ENCODE measurements at regions of chr14 and their contacts with region 1.

Region 1: DNA sequence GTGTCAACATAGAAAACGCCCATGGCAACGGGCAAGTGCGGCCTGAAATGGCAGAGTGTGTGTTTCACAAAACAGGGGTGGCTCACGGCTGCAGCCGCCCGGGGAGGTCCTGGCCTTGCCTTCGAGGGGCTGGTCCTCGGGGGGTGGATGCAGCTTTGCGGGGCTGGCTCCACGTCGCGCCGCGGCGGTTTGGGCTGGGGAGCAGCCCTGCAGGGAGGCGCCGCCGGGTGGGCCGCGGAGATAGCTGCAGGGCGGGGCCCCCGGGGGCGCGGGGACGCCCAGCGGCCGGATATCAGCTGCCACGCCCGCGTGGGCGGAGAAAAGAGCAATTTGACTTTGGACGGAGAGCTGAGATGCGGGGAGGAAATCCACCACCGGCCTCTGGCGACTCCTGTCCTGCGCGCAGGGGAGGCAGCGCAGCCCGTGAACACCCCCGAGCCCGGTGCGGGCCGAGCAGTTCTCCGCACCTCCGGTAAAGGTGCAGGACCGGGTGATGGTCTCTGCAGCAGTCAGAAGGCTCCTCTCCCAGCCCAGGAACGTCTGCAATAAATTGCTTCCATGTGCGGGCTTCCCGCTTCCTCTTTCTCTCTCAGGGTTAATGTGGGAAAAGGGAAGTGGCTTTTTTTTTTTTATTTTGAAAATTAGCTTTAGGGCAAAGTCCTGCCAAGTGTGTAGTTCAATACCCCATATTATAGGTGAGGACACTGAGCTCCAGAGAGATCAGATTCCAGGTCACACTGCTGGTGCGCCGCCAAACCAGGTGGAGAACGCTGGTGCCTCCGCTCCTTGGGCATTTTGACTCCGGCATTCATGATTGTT is 110.5 kb downstream of the ARF6 start:
- DNase-seq: peak; percentile 90
- ATAC-seq: peak; percentile 31
- H3K4me3 Mint-ChIP-seq: peak overlapping the region; percentile 82
- H3K27ac Mint-ChIP-seq: peak overlapping the region; percentile 95
- H3K4me1 Mint-ChIP-seq: peaks cover 43% of the 10 kb centered on the region
- H3K27me3 Mint-ChIP-seq: no peaks in the 10 kb centered on the region

Region 2: DNA sequence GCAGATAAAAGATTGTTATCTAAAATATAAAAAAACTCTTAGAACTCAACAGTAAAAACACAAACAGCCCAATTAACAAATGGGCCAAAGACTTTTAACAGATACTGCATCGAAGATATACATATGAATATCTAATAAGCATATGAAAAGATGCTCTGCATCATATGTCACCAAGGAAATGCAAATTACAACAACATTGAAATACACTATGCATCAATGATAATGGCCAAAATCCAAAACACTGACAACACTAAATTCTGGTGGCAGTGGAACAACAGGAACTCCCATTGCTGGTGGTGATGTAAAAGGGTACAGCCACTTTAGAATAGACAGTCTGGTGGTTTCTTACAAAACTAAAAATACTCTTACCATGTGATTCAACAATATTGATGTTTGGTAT is 194.6 kb before region 1 on chr14:
- POLR2A ChIA-PET with region 1: no interaction called
- DNase-seq: no peak
- ATAC-seq: no peak
- H3K4me3 Mint-ChIP-seq: no peak overlapping the region
- H3K27ac Mint-ChIP-seq: no peak overlapping the region
- H3K4me1 Mint-ChIP-seq: peaks cover 7% of the 10 kb centered on the region
- H3K27me3 Mint-ChIP-seq: no peaks in the 10 kb centered on the region

Region 3: DNA sequence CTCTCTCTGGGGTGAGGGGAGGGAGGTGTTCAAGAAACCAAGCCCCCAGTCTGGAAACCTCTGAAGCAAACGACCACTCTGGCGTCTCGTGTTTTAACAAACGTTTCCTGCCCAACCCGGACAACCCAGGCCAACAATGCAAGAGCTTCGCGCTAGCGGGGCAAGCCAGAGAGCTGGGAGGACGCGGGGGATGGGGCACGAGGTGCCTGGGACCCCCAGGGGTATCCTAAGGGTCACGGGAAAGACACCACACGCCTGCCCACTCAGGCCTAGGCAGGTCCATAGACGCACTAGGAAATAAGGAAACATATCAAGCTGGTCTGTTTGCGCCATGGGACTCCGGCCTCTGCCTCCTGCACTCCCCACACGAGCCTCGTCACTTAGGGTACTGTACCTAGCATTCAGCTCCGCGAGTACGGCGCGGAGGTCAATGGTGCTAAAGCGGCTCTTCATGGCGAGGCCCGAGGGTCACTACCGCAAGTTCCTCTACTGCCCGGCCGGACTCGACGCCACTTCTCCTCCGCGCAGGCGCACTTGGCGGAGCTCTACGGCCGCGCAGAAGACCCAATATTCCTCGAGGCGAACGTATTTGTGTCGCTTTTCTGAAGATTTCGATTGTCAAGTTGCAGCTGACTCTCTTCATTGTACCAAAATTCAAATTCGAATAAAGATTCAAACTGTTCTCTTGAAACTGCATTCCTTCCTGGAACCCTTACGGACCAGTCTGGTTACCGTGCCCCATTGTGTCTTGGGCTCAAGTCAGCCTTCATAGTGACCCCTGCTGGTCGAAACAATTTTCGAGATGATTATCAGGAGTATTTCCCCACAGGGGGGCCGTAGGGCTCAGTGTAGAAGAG is 150.9 kb before region 1 on chr14 and contains the start of gene NEMF:
- POLR2A ChIA-PET with region 1: interaction called, 13 read pairs
- DNase-seq: peak; percentile 81
- ATAC-seq: peak; percentile 80
- H3K4me3 Mint-ChIP-seq: peak within 1 kb of the TSS; percentile 99
- H3K27ac Mint-ChIP-seq: peak within 1 kb of the TSS; percentile 99
- H3K4me1 Mint-ChIP-seq: peaks cover 29% of the 10 kb centered on the region
- H3K27me3 Mint-ChIP-seq: no peaks in the 10 kb centered on the region
- total RNA-seq, gene NEMF: 90.1 to 91.1 TPM

Region 4: DNA sequence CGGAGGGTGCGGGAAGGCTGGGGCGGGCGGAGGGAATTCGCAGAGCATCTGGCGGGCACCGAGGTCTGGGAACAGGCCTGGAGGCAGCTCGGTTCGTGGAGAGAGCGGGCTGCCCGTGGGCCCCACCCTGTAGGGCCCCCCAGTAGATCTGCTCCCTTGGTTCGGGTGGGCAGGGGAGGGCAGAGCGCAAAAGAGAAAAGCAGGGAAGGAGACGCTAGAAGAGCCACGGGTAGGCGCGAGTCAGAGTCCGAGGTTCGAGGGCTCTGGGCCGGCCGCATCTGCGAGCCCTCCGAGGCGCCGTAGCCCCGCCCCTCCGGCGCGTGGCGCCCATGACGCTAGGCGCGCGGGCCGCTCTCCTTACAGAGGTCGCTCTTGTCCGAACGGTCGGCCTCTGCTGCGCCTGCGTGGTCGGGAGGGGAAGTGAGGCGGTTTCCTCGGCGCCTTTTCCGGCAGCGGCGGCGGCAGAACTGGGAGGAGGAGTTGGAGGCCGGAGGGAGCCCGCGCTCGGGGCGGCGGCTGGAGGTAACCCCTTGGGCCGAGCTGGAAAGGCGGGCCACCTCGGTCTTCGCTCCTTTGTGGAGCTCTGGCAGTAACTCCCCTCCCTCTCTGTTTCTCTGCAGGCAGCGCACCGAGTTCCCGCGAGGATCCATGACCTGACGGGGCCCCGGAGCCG is 110.7 kb before region 1 on chr14 and contains the start of gene ARF6:
- POLR2A ChIA-PET with region 1: interaction called, 121 read pairs
- DNase-seq: peak; percentile 98
- ATAC-seq: peak; percentile 89
- H3K4me3 Mint-ChIP-seq: peak within 1 kb of the TSS; percentile 99
- H3K27ac Mint-ChIP-seq: peak within 1 kb of the TSS; percentile 99
- H3K4me1 Mint-ChIP-seq: peaks cover 16% of the 10 kb centered on the region
- H3K27me3 Mint-ChIP-seq: no peaks in the 10 kb centered on the region
- total RNA-seq, gene ARF6: 162 to 169 TPM

Region 5: DNA sequence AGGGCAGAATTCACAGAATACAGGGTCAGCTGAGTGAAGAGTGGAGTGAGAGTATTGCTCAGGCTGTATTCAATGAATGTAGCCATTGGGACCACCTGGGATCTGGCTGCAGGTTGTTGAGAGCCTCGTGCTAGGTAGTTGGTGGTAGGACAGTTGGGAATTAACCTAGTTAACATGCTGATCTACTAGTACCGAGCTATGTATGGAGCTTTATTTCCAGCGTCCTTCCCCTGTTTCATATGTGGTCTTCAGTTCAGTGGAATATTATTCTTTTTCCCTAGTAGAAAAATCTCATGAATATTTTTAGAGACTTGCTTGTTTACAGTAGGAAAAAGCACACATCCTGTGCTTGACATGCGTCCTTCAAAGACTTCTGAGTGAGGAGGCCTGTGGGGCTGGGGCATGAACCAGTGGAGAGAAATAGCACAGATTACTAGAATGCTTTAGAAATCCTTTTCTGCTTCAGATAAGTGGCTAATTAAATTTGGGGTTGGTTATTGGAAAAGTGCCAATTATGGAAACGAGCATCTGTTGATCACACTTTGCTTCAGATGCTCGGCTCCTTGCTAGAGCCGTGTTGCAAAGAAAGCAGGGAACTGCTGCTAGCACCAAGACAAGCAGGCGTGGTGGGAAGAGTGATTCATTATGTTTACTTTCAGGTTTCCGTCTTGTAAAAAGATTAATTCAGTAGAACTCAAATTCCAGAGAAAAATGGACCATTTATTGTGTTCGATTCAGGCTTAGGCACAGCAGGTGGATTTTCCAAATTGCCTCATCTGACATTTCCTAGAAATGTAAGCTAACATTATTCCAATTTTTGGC is 56.9 kb before region 1 on chr14:
- POLR2A ChIA-PET with region 1: interaction called, 32 read pairs
- DNase-seq: no peak
- ATAC-seq: peak; percentile 66
- H3K4me3 Mint-ChIP-seq: peak overlapping the region; percentile 58
- H3K27ac Mint-ChIP-seq: peak overlapping the region; percentile 89
- H3K4me1 Mint-ChIP-seq: peaks cover 64% of the 10 kb centered on the region
- H3K27me3 Mint-ChIP-seq: no peaks in the 10 kb centered on the region

Region 6: DNA sequence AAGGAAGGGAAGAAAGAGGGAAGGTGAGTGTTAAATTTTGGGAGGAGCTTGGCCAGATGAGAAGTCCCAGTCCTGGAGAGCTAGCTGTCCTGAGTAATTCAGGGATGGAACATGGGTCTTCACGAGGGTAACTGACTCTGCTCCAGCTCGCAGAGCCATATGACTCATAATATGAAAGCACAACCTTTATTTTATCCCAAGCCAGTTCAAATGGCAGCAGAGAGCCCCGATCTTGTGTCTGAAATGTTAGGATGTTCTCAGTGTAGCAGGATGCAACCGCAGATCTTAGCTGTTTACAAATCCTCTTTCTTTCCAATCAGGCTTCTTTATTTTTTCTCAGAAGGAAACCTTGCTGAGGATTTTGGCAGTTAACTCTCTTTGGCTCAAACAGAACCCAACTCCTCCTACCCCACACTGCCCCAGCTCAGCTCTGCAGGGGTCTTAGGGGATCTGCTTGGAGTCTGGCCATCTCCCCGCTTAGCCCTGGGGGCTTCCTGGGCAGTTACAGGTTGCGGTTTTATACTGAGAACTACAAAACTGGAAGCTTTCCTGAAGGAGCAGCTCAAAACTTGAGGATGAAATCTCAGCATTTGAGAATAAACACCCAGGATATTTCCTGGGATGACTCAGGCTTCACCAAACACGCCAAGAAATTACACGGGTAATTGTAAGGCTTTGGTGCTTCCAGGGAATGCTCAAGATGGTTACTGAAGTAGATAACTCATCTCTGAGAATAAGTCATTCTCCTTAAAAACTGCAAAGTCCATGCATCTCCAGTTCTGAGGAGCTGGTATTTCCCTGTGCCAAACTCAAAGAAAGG is 20.5 kb after region 1 on chr14:
- POLR2A ChIA-PET with region 1: interaction called, 10 read pairs
- DNase-seq: no peak
- ATAC-seq: no peak
- H3K4me3 Mint-ChIP-seq: no peak overlapping the region
- H3K27ac Mint-ChIP-seq: no peak overlapping the region
- H3K4me1 Mint-ChIP-seq: peaks cover 21% of the 10 kb centered on the region
- H3K27me3 Mint-ChIP-seq: no peaks in the 10 kb centered on the region

Region 7: GRCh38 chr14:50060871-50061663 is 57.6 kb after region 1 on chr14:
- POLR2A ChIA-PET with region 1: interaction called, 239 read pairs
- DNase-seq: peak; percentile 65
- ATAC-seq: peak; percentile 11
- H3K4me3 Mint-ChIP-seq: peak overlapping the region; percentile 99
- H3K27ac Mint-ChIP-seq: peak overlapping the region; percentile 100
- H3K4me1 Mint-ChIP-seq: peaks cover 76% of the 10 kb centered on the region
- H3K27me3 Mint-ChIP-seq: no peaks in the 10 kb centered on the region

Region 8: DNA sequence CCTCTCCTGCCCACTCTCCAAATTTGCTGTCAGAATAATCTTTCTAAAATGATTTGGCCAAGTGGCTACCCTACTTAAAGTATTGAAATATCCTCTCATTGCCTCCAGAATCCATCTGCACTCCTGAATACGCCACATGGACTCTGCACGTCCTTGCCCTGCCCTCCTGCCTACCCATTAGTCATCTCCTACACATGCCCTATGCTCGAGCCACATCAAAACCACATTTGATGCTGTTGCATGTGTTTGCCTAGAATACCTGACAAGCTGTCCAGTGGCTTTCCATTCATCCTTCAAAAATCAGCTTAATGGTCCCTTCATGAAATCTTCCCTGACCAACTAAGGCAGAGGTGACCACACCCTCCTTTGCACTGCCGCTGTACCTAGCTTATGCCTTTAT is 95.9 kb after region 1 on chr14:
- POLR2A ChIA-PET with region 1: interaction called, 66 read pairs
- DNase-seq: no peak
- ATAC-seq: peak; percentile 46
- H3K4me3 Mint-ChIP-seq: peak overlapping the region; percentile 33
- H3K27ac Mint-ChIP-seq: peak overlapping the region; percentile 70
- H3K4me1 Mint-ChIP-seq: peaks cover 56% of the 10 kb centered on the region
- H3K27me3 Mint-ChIP-seq: no peaks in the 10 kb centered on the region

Region 9: GRCh38 chr14:50123062-50123461 is 119.6 kb after region 1 on chr14:
- POLR2A ChIA-PET with region 1: no interaction called
- DNase-seq: no peak
- ATAC-seq: no peak
- H3K4me3 Mint-ChIP-seq: no peak overlapping the region
- H3K27ac Mint-ChIP-seq: no peak overlapping the region
- H3K4me1 Mint-ChIP-seq: peaks cover 3% of the 10 kb centered on the region
- H3K27me3 Mint-ChIP-seq: no peaks in the 10 kb centered on the region

Region 10: GRCh38 chr14:50231475-50232275 is 228.3 kb after region 1 on chr14 and contains the start of gene SOS2:
- POLR2A ChIA-PET with region 1: no interaction called
- DNase-seq: peak; percentile 89
- ATAC-seq: peak; percentile 81
- H3K4me3 Mint-ChIP-seq: peak within 1 kb of the TSS; percentile 82
- H3K27ac Mint-ChIP-seq: peak within 1 kb of the TSS; percentile 96
- H3K4me1 Mint-ChIP-seq: peaks cover 17% of the 10 kb centered on the region
- H3K27me3 Mint-ChIP-seq: no peaks in the 10 kb centered on the region
- total RNA-seq, gene SOS2: 34.6 to 36.1 TPM

Measured in activated naive CD8-positive, alpha-beta T cell treated with anti-CD3 and anti-CD28 coated beads, Interleukin-2, amount 10 ng/mL, durations not matched to agents 7 days and 5 days (primary cell).